Endothelial cell of umbilical vein (primary cell): ENCODE measurements at regions of chr11 and their contacts with region 1.

Region 1: GRCh38 chr11:45655347-45655756 is 10.1 kb downstream of the CHST1 start:
- DNase-seq: peak; percentile 78
- H3K4me3 ChIP-seq: no peak overlapping the region
- H3K27ac ChIP-seq: no peak overlapping the region
- H3K4me1 ChIP-seq: peaks cover 41% of the 10 kb centered on the region
- H3K27me3 ChIP-seq: no peaks in the 10 kb centered on the region
- CTCF ChIP-seq: peak; percentile 92 to 95
- POLR2A ChIP-seq: no peak

Region 2: GRCh38 chr11:45264839-45265555 is 390.4 kb before region 1 on chr11:
- CTCF ChIA-PET with region 1: no interaction called
- POLR2A ChIA-PET with region 1: no interaction called
- dilution Hi-C with region 1: no loop called
- intact Hi-C with region 1: no loop called
- DNase-seq: peak; percentile 56
- H3K4me3 ChIP-seq: no peak overlapping the region
- H3K27ac ChIP-seq: no peak overlapping the region
- H3K4me1 ChIP-seq: peaks cover 3% of the 10 kb centered on the region
- H3K27me3 ChIP-seq: peaks cover 0 to 2% of the 10 kb centered on the region in 2 experiments
- CTCF ChIP-seq: no peak
- POLR2A ChIP-seq: no peak

Region 3: GRCh38 chr11:45371251-45372115 is 283.9 kb before region 1 on chr11:
- CTCF ChIA-PET with region 1: interaction called, 118 read pairs
- POLR2A ChIA-PET with region 1: no interaction called
- dilution Hi-C with region 1: no loop called
- intact Hi-C with region 1: loop called (anchors 1 kb)
- DNase-seq: peak; percentile 63
- H3K4me3 ChIP-seq: no peak overlapping the region
- H3K27ac ChIP-seq: no peak overlapping the region
- H3K4me1 ChIP-seq: no peaks in the 10 kb centered on the region
- H3K27me3 ChIP-seq: peaks cover 6 to 7% of the 10 kb centered on the region in 2 experiments
- CTCF ChIP-seq: peak; percentile 94 to 96
- POLR2A ChIP-seq: no peak

Region 4: GRCh38 chr11:45400591-45400990 is 254.8 kb before region 1 on chr11:
- CTCF ChIA-PET with region 1: interaction called, 14 read pairs
- POLR2A ChIA-PET with region 1: no interaction called
- dilution Hi-C with region 1: no loop called
- intact Hi-C with region 1: loop called (anchors 1 kb)
- DNase-seq: peak; percentile 41
- H3K4me3 ChIP-seq: no peak overlapping the region
- H3K27ac ChIP-seq: peak overlapping the region; percentile 60
- H3K4me1 ChIP-seq: peaks cover 17% of the 10 kb centered on the region
- H3K27me3 ChIP-seq: no peaks in the 10 kb centered on the region
- CTCF ChIP-seq: no peak
- POLR2A ChIP-seq: no peak

Region 5: GRCh38 chr11:45405916-45406670 is 249.3 kb before region 1 on chr11:
- CTCF ChIA-PET with region 1: interaction called, 14 read pairs
- POLR2A ChIA-PET with region 1: no interaction called
- dilution Hi-C with region 1: no loop called
- intact Hi-C with region 1: no loop called
- DNase-seq: peak; percentile 22
- H3K4me3 ChIP-seq: no peak overlapping the region
- H3K27ac ChIP-seq: no peak overlapping the region
- H3K4me1 ChIP-seq: peaks cover 4% of the 10 kb centered on the region
- H3K27me3 ChIP-seq: peaks cover 0 to 2% of the 10 kb centered on the region in 2 experiments
- CTCF ChIP-seq: peak; percentile 33 to 38
- POLR2A ChIP-seq: no peak

Region 6: DNA sequence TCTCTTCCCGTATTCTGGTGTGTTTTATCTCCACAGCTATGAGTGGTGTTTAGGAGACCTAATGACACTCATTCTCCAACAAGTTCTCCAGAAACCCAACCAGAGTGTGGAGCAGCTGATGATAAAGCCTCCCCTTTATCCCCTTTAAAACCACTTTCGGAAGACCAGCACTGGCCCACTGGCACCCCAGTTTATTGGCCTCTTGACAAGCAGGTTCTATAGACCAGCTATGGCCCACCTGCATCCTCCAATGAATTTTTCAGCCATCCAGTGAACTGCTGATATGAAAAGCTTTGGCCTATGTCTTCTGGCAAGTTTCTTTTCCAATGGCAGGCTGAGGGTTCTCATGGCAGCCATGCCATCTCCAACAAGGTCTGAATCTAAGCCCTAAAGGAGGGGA is 17.3 kb before region 1 on chr11:
- CTCF ChIA-PET with region 1: interaction called, 23 read pairs
- POLR2A ChIA-PET with region 1: no interaction called
- dilution Hi-C with region 1: no loop called
- intact Hi-C with region 1: loop called (anchors 2 kb)
- DNase-seq: no peak
- H3K4me3 ChIP-seq: no peak overlapping the region
- H3K27ac ChIP-seq: no peak overlapping the region
- H3K4me1 ChIP-seq: peaks cover 17% of the 10 kb centered on the region
- H3K27me3 ChIP-seq: peaks cover 0 to 3% of the 10 kb centered on the region in 2 experiments
- CTCF ChIP-seq: no peak
- POLR2A ChIP-seq: no peak

Region 7: GRCh38 chr11:45665206-45665932 is 10.0 kb after region 1 on chr11 and contains the start of gene CHST1:
- CTCF ChIA-PET with region 1: interaction called, 25 read pairs
- POLR2A ChIA-PET with region 1: no interaction called
- dilution Hi-C with region 1: no loop called
- intact Hi-C with region 1: no loop called
- DNase-seq: peak; percentile 51
- H3K4me3 ChIP-seq: peak within 1 kb of the TSS; percentile 47 to 59 (median 55)
- H3K27ac ChIP-seq: no peak within 1 kb of the TSS
- H3K4me1 ChIP-seq: peaks cover 29% of the 10 kb centered on the region
- H3K27me3 ChIP-seq: peaks cover 0 to 8% of the 10 kb centered on the region in 2 experiments
- CTCF ChIP-seq: no peak
- POLR2A ChIP-seq: no peak
- total RNA-seq, gene CHST1: 40.5 and 71.2 TPM in 2 replicates

Region 8: DNA sequence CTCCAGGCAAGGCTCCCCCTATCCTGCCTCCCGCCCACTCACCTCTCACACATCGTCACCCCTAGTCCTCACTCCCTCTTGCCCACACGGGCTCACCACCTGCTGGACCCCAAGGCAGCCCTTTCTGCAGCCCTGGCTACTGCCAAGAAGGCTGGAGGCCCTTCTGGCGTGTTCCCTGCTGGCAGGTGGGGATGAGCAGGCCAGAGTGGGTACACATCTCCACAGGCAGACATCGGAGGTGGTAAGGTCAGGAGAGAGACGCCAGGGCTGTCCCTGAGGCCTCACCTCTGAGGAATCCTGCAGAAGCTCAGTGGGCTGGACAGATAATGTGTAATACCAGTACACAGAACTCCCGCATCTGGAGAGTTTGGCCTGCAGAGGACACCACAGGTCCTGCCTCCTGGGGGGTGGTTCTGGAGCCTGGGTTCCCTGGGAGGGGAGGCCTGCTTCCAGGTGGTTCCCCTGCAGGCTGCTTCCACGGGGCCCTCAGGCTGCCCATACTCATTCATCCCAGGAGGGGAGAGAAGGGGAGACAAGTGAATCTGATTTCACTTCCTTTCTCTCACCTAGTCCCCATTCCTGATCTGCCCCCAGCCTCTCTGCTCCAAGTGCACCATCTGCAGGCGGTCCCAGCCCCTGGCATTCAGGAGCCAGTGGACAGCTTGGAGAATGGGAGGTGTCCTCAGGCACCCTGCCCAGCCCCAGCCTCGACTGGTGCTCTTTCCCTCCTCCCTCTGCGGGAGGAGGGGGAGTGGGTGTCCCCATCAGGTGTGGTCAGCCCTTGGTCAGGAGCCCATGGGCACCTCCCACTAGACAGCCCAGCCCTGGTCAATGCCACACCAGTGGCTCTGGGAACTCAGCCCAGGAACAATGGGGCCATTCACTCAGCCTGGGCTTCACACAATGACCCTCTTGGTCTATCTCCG is 16.2 kb after region 1 on chr11:
- CTCF ChIA-PET with region 1: interaction called, 21 read pairs
- POLR2A ChIA-PET with region 1: no interaction called
- dilution Hi-C with region 1: no loop called
- intact Hi-C with region 1: no loop called
- DNase-seq: no peak
- H3K4me3 ChIP-seq: no peak overlapping the region
- H3K27ac ChIP-seq: no peak overlapping the region
- H3K4me1 ChIP-seq: no peaks in the 10 kb centered on the region
- H3K27me3 ChIP-seq: peaks cover 0 to 4% of the 10 kb centered on the region in 2 experiments
- CTCF ChIP-seq: peak in 1 of 2 donors; percentile 19
- POLR2A ChIP-seq: no peak